IMR-90 (cell line): ENCODE measurements at regions of chr9 and their contacts with region 1.

Region 1: GRCh38 chr9:72675586-72675985 is 154.2 kb downstream of the TMC1 start:
- DNase-seq: no peak
- ATAC-seq: no peak
- H3K4me3 ChIP-seq: no peak overlapping the region
- H3K27ac ChIP-seq: no peak overlapping the region
- H3K4me1 ChIP-seq: no peaks in the 10 kb centered on the region
- H3K27me3 ChIP-seq: no peaks in the 10 kb centered on the region; the same call in 1 of the 2 replicates
- CTCF ChIP-seq: no peak
- POLR2A ChIP-seq: no peak
- RAD21 ChIP-seq: no peak

Region 2: GRCh38 chr9:72119853-72120252 is 555.7 kb before region 1 on chr9:
- CTCF ChIA-PET with region 1: no interaction called
- POLR2A ChIA-PET with region 1: no interaction called
- dilution Hi-C with region 1: no loop called
- in situ Hi-C with region 1: no loop called
- intact Hi-C with region 1: loop called (anchors 10 kb)
- DNase-seq: no peak
- ATAC-seq: no peak
- H3K4me3 ChIP-seq: no peak overlapping the region
- H3K27ac ChIP-seq: no peak overlapping the region
- H3K4me1 ChIP-seq: no peaks in the 10 kb centered on the region
- H3K27me3 ChIP-seq: no peaks in the 10 kb centered on the region
- CTCF ChIP-seq: no peak
- POLR2A ChIP-seq: no peak
- RAD21 ChIP-seq: no peak

Region 3: DNA sequence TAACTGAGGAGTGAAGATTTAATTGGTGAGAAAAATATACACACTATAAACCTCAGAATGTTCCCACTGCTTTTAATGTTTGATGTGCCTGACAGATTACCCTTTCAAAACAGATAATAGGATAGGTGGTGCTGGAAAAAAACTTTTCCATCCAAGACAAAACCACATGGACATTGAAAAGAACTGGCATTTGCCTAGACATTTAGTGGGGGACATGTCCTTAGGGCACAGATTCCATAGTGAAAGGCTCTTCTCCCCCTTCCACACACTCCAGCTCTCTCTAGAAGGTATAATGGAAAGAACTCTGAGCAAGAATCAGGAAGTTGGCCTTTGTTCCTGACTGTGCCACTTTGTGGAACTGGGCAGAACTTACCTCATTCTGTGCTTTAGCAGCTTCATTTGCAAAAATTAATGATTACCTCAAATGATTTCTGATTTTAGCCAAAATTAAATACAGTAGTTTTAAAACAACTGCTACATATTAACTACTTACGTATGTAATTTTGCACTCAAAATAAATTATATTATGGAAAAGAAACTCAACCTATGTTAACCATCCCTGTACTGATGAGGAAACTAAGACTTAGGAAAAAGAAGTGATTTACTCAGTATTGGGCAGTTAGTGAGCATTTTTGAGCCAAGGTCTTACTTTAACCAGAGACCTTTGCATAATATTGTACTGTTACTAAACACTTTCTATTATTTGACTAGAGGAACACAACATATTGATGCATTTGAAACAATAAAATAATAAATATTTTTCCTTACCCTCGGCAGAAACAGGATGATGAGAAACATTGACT is 110.9 kb before region 1 on chr9:
- CTCF ChIA-PET with region 1: no interaction called
- POLR2A ChIA-PET with region 1: no interaction called
- dilution Hi-C with region 1: no loop called
- in situ Hi-C with region 1: no loop called
- intact Hi-C with region 1: no loop called
- DNase-seq: no peak
- ATAC-seq: no peak
- H3K4me3 ChIP-seq: no peak overlapping the region
- H3K27ac ChIP-seq: no peak overlapping the region
- H3K4me1 ChIP-seq: no peaks in the 10 kb centered on the region
- H3K27me3 ChIP-seq: no peaks in the 10 kb centered on the region
- CTCF ChIP-seq: no peak
- POLR2A ChIP-seq: no peak
- RAD21 ChIP-seq: no peak